Activated T-helper 2 cell treated with anti-CD3 and anti-CD28 coated beads, Interferon-gamma antibody, Interleukin-2, Interleukin-4, amounts not matched to agents 10 μg/mL and 5 μg/mL and 100 μg/mL, durations not matched to agents 14 hours and 24 hours and 36 hours (primary cell): ENCODE measurements at regions of chr13 and their contacts with region 1.

Region 1: GRCh38 chr13:30306762-30307193 is 573 bp downstream of the KATNAL1 start:
- DNase-seq: peak; percentile 88
- H3K4me3 Mint-ChIP-seq: peak overlapping the region; percentile 86
- H3K27ac Mint-ChIP-seq: peak overlapping the region; percentile 80
- H3K4me1 Mint-ChIP-seq: peaks cover 38% of the 10 kb centered on the region
- H3K27me3 Mint-ChIP-seq: no peaks in the 10 kb centered on the region

Region 2: GRCh38 chr13:29758531-29759114 is 548.2 kb before region 1 on chr13:
- intact Hi-C with region 1: loop called (anchors 5 kb)
- DNase-seq: peak; percentile 35
- H3K4me3 Mint-ChIP-seq: no peak overlapping the region
- H3K27ac Mint-ChIP-seq: peak overlapping the region; percentile 56
- H3K4me1 Mint-ChIP-seq: peaks cover 17% of the 10 kb centered on the region
- H3K27me3 Mint-ChIP-seq: peaks cover 8% of the 10 kb centered on the region

Region 3: DNA sequence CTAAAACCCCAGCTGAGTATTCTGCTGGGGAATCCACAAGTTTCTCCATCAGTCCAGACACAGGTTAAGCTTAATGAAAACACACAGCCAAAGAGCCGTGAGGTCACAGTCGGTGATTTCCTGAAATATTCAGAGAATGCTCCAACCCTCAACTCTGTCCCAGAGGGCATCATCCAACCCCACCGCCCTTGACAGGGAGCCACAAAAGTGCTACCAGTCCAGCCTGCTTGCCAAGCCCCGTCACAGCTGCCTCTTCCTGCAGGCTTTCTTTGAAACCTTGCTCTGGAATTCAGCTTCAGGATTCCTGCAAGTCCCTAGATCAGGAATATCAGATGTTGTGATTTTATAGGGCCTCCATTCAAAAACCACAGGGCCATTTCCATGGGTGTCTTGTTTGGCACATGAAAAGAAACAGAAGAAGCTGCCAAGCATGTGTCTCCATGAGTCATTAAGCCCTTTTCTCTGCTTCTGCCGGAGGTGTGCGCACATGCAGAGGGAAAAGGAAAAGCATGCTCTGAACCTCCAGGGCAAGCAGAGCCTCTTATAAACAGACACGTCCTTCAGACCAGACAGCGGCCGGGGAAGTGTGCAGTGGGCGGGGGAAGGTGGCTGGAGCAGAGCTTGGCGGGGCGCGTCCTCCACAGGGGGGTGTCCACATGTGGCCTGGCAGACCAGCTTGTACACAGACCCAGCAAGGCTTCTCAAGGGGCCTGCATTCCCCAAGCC is 164.1 kb before region 1 on chr13:
- intact Hi-C with region 1: loop called (anchors 5 kb)
- DNase-seq: no peak
- H3K4me3 Mint-ChIP-seq: no peak overlapping the region
- H3K27ac Mint-ChIP-seq: peak overlapping the region; percentile 79
- H3K4me1 Mint-ChIP-seq: peaks cover 49% of the 10 kb centered on the region
- H3K27me3 Mint-ChIP-seq: peaks cover 3% of the 10 kb centered on the region

Region 4: DNA sequence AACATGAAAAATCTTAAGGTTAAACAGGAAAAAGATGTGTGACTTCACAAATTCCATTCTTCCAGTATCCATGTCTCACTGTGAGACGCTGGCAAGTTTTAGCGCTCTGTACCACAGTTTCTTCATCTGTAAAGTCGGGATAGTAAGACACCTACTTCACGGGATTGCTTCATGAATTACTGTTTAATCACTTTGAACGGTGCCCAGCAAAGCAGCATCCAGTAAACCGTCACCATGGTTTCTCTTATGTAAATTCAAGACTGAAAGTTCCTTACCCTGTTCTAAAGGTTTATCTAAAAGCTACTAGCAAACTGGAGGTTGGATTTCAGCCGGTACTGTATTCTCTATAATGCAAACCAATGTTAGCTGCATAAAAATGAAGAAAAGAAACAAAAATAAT is 52.9 kb before region 1 on chr13:
- intact Hi-C with region 1: loop called (anchors 5 kb)
- DNase-seq: no peak
- H3K4me3 Mint-ChIP-seq: no peak overlapping the region
- H3K27ac Mint-ChIP-seq: no peak overlapping the region
- H3K4me1 Mint-ChIP-seq: peaks cover 15% of the 10 kb centered on the region
- H3K27me3 Mint-ChIP-seq: no peaks in the 10 kb centered on the region

Region 5: DNA sequence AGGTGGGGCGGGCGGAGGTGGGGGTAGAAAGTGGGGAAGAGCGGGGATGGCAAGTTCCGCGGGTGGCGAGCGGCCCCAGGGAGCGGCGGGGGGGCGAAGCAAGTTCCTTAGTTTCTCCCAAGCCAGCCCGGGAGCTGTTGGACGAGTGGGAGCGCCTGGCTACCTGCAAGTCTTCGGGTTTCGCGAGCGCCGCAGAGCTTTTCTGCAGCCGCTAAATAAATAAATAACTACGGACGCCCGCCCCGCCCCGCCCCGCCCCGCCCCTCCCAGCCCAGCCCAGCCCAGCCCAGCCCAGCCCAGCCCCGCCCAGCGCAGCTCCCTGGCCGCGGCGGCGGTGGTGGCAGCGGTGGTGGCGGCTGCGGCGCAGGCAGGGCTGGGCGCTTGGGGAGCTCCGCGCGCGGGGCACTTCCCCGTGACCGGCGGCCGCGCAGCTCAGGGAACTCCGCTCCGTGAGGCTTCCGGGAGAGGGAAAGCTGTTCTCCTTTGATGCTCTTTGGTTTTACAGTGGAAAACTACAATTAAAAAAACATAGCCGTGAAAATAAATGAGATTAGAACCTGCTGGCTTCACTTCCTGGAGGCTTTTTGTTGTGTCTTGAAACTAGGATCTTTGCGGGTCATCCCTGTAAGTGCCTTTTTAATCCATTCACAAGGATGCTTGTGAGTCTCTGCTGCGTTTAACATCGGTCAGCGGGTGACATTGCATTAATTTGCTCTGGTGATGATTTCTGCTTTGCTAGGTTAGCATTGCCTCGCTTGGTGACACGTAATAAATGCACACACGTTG is 115.5 kb after region 1 on chr13 and contains the start of gene UBE2L5:
- intact Hi-C with region 1: loop called (anchors 10 kb)
- DNase-seq: peak; percentile 73
- H3K4me3 Mint-ChIP-seq: peak within 1 kb of the TSS; percentile 86
- H3K27ac Mint-ChIP-seq: peak within 1 kb of the TSS; percentile 76
- H3K4me1 Mint-ChIP-seq: peaks cover 14% of the 10 kb centered on the region
- H3K27me3 Mint-ChIP-seq: no peaks in the 10 kb centered on the region
- total RNA-seq, gene UBE2L5: not detected in 2 replicates